ENCODE measurements at regions of chr7 and their contacts with region 1.

Region 1: DNA sequence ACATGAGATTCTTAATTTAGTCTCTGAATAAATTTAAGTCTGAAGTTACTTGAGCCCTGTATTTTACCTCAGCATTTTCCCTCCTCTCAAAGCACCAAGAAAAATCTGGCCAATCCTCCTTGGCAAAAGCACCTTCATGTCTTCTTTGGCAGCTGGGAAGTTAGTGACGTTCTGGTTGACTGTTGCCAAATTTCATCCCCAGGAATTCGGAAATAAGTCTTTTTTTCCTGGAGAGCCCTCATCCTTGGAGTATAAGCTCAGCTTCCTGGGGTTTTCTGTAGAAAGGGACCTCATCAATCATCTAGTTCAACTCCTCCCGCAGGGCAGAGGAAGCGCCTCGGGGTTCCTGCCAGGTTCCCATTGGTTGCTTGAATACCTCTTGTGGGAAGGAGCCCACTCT is 377.6 kb downstream of the PHTF2 start:
- DNase-seq: no peak
- H3K4me3 ChIP-seq: no peak overlapping the region
- H3K27ac ChIP-seq: no peak overlapping the region
- H3K4me1 ChIP-seq: no peaks in the 10 kb centered on the region
- H3K27me3 ChIP-seq: peaks cover 9% of the 10 kb centered on the region; the same call in 1 of the 2 replicates
- CTCF ChIP-seq: no peak

Region 2: DNA sequence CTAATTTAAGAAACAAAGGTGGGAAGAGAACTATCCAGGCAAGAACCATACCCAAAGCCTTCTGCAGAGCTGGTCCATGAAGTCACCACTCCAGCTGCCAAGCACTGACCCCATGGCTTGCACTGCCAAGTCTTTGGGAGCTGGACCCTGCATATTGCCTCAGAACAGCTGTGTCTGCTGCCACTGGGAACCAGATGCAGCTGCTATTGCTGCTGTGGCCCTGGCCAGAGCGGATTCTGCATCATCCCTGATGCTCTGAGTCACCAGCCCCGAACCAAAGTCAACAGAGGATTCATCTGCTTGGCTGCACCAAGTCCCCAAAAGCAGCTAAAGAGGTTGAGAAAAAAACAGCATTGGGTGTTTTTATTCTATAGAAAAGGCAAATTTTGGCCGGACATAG is 720.8 kb before region 1 on chr7:
- CTCF ChIA-PET with region 1: no interaction called
- POLR2A ChIA-PET with region 1: no interaction called
- intact Hi-C with region 1: no loop called
- DNase-seq: peak; percentile 16 to 79
- H3K4me3 ChIP-seq: no peak overlapping the region
- H3K27ac ChIP-seq: peak overlapping the region; percentile 26; the same call in 1 of the 2 replicates
- H3K4me1 ChIP-seq: peaks cover 19% of the 10 kb centered on the region
- H3K27me3 ChIP-seq: no peaks in the 10 kb centered on the region
- CTCF ChIP-seq: no peak

Region 3: GRCh38 chr7:78197447-78197846 is 21.3 kb after region 1 on chr7:
- CTCF ChIA-PET with region 1: no interaction called
- POLR2A ChIA-PET with region 1: interaction called, 22 read pairs
- intact Hi-C with region 1: no loop called
- DNase-seq: no peak
- H3K4me3 ChIP-seq: no peak overlapping the region
- H3K27ac ChIP-seq: no peak overlapping the region
- H3K4me1 ChIP-seq: no peaks in the 10 kb centered on the region
- H3K27me3 ChIP-seq: 0 out of 2 replicates have a peak, but pooled peaks cover 3% of the 10 kb centered on the region
- CTCF ChIP-seq: no peak

Region 4: GRCh38 chr7:78284945-78285344 is 108.8 kb after region 1 on chr7:
- CTCF ChIA-PET with region 1: no interaction called
- POLR2A ChIA-PET with region 1: no interaction called
- intact Hi-C with region 1: no loop called
- DNase-seq: no peak
- H3K4me3 ChIP-seq: no peak overlapping the region
- H3K27ac ChIP-seq: no peak overlapping the region
- H3K4me1 ChIP-seq: no peaks in the 10 kb centered on the region
- H3K27me3 ChIP-seq: no peaks in the 10 kb centered on the region
- CTCF ChIP-seq: no peak

Measured in PC-9 (cell line).